Activated T-helper 2 cell treated with anti-CD3 and anti-CD28 coated beads, Interferon-gamma antibody, Interleukin-2, Interleukin-4, amounts not matched to agents 10 μg/mL and 5 μg/mL and 100 μg/mL, durations not matched to agents 14 hours and 24 hours and 36 hours (primary cell): ENCODE measurements at regions of chr20 and their contacts with region 1.

Region 1: GRCh38 chr20:53677447-53678314 is 84.0 kb upstream of the ZNF217 start:
- DNase-seq: no peak
- H3K4me3 Mint-ChIP-seq: peak overlapping the region; percentile 48
- H3K27ac Mint-ChIP-seq: peak overlapping the region; percentile 89
- H3K4me1 Mint-ChIP-seq: peaks cover 26% of the 10 kb centered on the region
- H3K27me3 Mint-ChIP-seq: no peaks in the 10 kb centered on the region

Region 2: DNA sequence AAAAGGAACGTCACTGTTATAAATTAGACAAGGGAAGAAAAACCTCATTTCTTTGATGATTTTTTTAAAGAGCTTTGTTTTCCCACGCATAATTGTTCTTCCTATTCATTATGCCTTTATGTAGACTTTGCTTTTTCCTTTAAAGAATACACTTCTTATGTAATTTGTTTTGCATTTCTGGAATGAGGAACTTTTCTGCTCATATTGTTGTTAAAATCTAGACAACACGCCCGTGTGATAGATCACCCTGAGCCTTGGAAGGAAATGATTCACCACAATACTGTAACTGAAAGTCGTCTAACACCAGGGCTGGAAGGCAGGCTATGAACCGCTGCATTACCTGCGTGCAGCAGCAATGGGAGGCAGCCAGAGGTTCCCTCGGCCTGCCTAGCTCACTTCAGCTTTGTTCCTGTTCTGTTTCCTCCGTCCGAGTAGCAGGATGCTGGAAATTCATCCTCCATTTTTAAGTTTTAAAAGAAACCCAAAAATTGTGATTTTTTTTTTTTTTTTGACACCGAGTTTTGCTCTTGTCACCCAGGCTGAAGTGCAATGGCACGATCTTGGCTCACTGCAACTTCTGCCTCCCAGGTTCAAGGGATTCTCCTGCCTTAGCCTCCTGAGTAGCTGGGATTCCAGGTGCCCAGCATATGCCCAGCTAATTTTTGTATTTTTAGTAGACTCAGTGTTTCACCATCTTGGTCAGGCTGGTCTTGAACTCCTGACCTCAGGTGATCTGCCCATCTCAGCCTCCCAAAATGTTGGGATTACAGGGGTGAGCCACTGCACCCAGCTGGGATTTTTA is 34.4 kb before region 1 on chr20:
- intact Hi-C with region 1: loop called (anchors 1 kb)
- DNase-seq: peak; percentile 67
- H3K4me3 Mint-ChIP-seq: peak overlapping the region; percentile 76
- H3K27ac Mint-ChIP-seq: peak overlapping the region; percentile 95
- H3K4me1 Mint-ChIP-seq: peaks cover 33% of the 10 kb centered on the region
- H3K27me3 Mint-ChIP-seq: no peaks in the 10 kb centered on the region

Region 3: DNA sequence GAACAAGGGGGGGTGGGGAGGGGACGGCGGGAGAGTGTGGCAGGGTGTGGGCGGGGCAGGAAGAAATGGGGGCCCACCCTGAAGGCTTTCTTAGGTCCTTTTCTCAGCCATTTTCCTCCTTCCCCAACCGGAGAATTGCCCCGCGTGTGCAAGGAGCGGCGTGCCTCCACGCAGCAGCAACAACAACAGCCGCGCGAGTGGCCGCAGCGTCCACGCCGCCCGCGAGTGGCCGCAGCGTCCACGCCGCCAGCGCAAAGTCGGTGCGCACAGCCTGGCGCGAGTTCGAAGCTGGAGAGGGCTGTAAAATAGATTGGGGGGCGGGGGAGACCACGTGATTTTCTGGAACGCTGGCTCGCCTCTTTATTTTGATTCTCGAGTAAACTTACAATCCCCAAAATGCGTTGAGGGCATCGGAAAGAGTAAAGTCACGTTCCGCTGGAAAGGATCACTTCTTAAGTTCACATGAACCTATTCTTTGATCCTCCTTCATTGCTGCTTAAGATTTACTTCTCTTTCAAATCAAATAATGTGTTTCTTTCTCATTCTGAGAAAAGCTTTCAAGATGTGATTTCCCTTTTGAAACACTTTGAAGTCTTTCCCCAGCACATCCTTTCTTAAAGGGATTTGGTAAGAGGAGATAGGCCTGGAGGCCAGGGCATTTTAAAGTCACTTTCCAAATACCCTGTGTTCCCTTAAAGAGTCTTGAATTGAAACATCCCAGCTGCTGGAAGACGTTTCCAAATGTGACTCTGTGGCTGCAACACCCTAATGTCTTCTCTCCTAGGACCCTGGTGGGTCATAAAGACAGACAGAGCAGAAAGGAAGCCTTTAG is 17.4 kb before region 1 on chr20:
- intact Hi-C with region 1: no loop called
- DNase-seq: no peak
- H3K4me3 Mint-ChIP-seq: peak overlapping the region; percentile 77
- H3K27ac Mint-ChIP-seq: peak overlapping the region; percentile 84
- H3K4me1 Mint-ChIP-seq: peaks cover 55% of the 10 kb centered on the region
- H3K27me3 Mint-ChIP-seq: no peaks in the 10 kb centered on the region

Region 4: GRCh38 chr20:54004445-54004844 is 326.8 kb after region 1 on chr20:
- intact Hi-C with region 1: no loop called
- DNase-seq: no peak
- H3K4me3 Mint-ChIP-seq: no peak overlapping the region
- H3K27ac Mint-ChIP-seq: no peak overlapping the region
- H3K4me1 Mint-ChIP-seq: peaks cover 2% of the 10 kb centered on the region
- H3K27me3 Mint-ChIP-seq: peaks cover 17% of the 10 kb centered on the region